Right ventricle myocardium inferior (tissue), 1 donor: ENCODE measurements at regions of chr2 and their contacts with region 1.

Region 1: GRCh38 chr2:160060297-160060696 is 2.1 kb downstream of the PLA2R1 start:
- DNase-seq: no peak
- ATAC-seq: no peak

Region 2: DNA sequence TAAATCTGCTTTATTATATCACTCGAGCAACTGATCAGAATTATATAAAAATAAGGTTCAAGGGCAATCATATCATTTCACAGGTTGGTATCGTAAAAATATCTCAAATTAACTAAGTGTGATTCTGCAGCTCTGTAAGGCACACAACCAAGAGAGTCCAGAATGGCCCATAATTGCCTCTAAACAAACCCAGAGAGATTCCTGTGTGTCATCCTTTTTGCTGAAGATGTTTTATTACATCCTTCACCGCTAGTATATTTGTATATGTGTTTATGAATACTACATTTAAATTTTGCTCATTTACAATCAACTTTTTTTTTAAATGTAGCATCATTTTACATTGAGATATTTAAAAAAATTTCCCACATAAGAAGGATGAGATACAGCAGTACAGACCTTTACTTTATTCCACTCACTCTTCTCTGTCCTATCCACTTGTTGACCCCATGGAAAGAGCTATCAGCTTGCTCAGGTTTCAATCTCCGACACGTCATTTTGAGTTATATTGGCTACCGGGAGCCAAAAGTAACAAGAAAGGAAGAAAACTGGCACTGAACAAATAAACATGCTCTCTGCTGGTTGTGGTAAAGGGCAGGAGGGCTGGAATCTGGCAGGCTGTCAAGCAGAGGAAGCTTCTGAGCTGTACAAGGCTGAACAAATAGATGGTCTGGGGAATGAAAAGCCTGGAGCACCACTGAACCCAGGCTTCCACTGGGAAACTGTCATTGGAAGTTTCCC is 21.0 kb before region 1 on chr2:
- intact Hi-C with region 1: loop called (anchors 1 kb)
- DNase-seq: no peak
- ATAC-seq: peak; percentile 61

Region 3: GRCh38 chr2:160292225-160292624 is 231.9 kb after region 1 on chr2:
- intact Hi-C with region 1: no loop called
- DNase-seq: no peak
- ATAC-seq: peak; percentile 30